Gastrocnemius medialis (tissue), 4 donors: ENCODE measurements at regions of chr1 and their contacts with region 1.

Region 1: GRCh38 chr1:176374967-176375569 is 87.9 kb upstream of the PAPPA2 start:
- DNase-seq: peak; percentile 32 to 61
- ATAC-seq: peak; percentile 68 to 81
- H3K4me3 ChIP-seq: no peak overlapping the region
- H3K27ac ChIP-seq: no peak overlapping the region
- H3K4me1 ChIP-seq: no peaks in the 10 kb centered on the region
- H3K27me3 ChIP-seq: no peaks in the 10 kb centered on the region
- CTCF ChIP-seq: peak; percentile 61 to 78 (median 72)
- POLR2A ChIP-seq: no peak

Region 2: DNA sequence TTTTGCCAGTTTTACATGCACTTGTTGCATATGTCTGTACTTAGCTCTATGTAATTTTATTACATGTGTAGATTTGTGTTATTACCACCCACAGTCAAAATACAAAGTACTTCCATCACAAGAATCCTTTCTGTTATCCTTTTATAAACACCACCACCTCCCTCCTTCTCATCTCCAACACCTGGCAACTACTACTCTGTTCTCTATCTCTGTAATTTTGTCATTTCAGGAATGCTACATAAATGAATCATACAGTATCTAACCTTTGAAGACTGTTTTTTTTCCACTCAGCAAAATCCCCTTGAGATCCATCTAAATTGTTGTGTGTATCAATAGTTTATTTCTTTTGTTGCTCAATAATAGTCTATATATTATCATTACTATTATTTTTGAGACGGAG is 103.5 kb before region 1 on chr1:
- in situ Hi-C with region 1: no loop called
- intact Hi-C with region 1: no loop called
- DNase-seq: no peak
- ATAC-seq: no peak
- H3K4me3 ChIP-seq: no peak overlapping the region
- H3K27ac ChIP-seq: no peak overlapping the region
- H3K4me1 ChIP-seq: no peaks in the 10 kb centered on the region
- H3K27me3 ChIP-seq: no peaks in the 10 kb centered on the region
- CTCF ChIP-seq: no peak
- POLR2A ChIP-seq: no peak

Region 3: GRCh38 chr1:176325664-176326063 is 49.4 kb before region 1 on chr1:
- in situ Hi-C with region 1: no loop called
- intact Hi-C with region 1: no loop called
- DNase-seq: no peak
- ATAC-seq: no peak
- H3K4me3 ChIP-seq: no peak overlapping the region
- H3K27ac ChIP-seq: no peak overlapping the region
- H3K4me1 ChIP-seq: no peaks in the 10 kb centered on the region
- H3K27me3 ChIP-seq: no peaks in the 10 kb centered on the region
- CTCF ChIP-seq: no peak
- POLR2A ChIP-seq: no peak

Region 4: DNA sequence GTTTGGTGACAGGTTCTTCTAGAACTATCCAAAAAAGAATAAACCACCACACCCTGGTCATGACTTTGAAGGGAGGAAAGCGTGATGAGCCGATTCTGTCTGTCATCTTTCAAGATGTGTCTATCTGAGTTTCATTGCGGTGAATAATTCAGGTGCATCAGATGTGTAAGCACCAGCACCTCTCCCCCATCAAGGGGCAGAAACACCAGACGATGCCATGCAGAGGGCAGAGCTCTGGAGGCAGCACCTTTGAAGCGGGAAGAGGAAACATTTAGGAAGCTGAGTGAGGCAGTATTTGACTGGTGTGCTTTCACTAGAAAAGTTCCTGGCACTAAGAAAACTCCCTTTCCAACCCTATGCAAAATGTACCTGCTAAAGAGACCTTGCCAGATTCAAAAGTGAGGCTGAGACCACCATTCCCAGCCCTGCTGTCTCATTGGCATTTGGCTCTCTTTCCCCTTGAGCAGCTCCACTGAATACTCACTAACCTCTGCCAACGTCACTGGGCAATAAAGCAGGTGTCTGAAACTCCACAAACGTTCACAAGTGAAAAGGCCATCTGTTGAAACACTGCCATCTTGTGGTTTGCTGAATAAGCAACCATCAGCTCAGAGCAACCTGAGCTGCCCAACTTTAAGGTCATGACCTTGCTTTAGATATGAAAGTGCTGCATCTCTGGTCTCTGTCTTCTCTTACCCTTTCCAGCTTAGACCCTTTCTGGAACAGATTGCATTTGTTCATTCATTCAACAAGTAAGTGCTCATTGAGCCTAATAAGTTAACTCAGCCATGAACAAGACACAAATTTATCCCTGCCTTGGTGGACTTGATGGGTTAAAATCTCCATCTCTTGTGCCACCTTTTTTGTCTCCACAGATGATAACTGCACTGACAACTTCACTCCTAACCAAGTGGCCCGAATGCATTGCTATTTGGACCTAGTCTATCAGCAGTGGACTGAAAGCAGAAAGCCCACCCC is 316.5 kb after region 1 on chr1:
- in situ Hi-C with region 1: no loop called
- intact Hi-C with region 1: loop called (anchors 5 kb)
- DNase-seq: peak; percentile 62 to 66
- ATAC-seq: peak; percentile 70 to 79
- H3K4me3 ChIP-seq: no peak overlapping the region
- H3K27ac ChIP-seq: peak overlapping the region; percentile 67 to 88 (median 84)
- H3K4me1 ChIP-seq: peaks cover 15 to 38% of the 10 kb centered on the region in 2 donors
- H3K27me3 ChIP-seq: no peaks in the 10 kb centered on the region
- CTCF ChIP-seq: peak; percentile 47 to 66 (median 50)
- POLR2A ChIP-seq: no peak

Region 5: GRCh38 chr1:176843352-176844297 is 468.6 kb after region 1 on chr1:
- in situ Hi-C with region 1: loop called in 2 of 4 experiments (anchors 10 to 25 kb)
- intact Hi-C with region 1: no loop called
- DNase-seq: no peak
- ATAC-seq: peak; percentile 56 to 57
- H3K4me3 ChIP-seq: no peak overlapping the region
- H3K27ac ChIP-seq: no peak overlapping the region
- H3K4me1 ChIP-seq: no peaks in the 10 kb centered on the region
- H3K27me3 ChIP-seq: no peaks in the 10 kb centered on the region
- CTCF ChIP-seq: peak; percentile 58 to 77 (median 67)
- POLR2A ChIP-seq: no peak

Region 6: GRCh38 chr1:176857632-176858031 is 482.6 kb after region 1 on chr1:
- in situ Hi-C with region 1: loop called in 2 of 4 experiments (anchors 25 kb)
- intact Hi-C with region 1: no loop called
- DNase-seq: no peak
- ATAC-seq: no peak
- H3K4me3 ChIP-seq: no peak overlapping the region
- H3K27ac ChIP-seq: no peak overlapping the region
- H3K4me1 ChIP-seq: no peaks in the 10 kb centered on the region
- H3K27me3 ChIP-seq: no peaks in the 10 kb centered on the region
- CTCF ChIP-seq: no peak
- POLR2A ChIP-seq: no peak

Region 7: GRCh38 chr1:176880954-176881595 is 506.0 kb after region 1 on chr1:
- in situ Hi-C with region 1: no loop called
- intact Hi-C with region 1: loop called (anchors 10 kb)
- DNase-seq: peak; percentile 26 to 42
- ATAC-seq: peak in 1 of 2 donors; percentile 87
- H3K4me3 ChIP-seq: no peak overlapping the region
- H3K27ac ChIP-seq: no peak overlapping the region
- H3K4me1 ChIP-seq: no peaks in the 10 kb centered on the region
- H3K27me3 ChIP-seq: no peaks in the 10 kb centered on the region
- CTCF ChIP-seq: peak; percentile 60 to 80 (median 76)
- POLR2A ChIP-seq: no peak